ENCODE measurements at regions of chr5 and their contacts with region 1.

Region 1: DNA sequence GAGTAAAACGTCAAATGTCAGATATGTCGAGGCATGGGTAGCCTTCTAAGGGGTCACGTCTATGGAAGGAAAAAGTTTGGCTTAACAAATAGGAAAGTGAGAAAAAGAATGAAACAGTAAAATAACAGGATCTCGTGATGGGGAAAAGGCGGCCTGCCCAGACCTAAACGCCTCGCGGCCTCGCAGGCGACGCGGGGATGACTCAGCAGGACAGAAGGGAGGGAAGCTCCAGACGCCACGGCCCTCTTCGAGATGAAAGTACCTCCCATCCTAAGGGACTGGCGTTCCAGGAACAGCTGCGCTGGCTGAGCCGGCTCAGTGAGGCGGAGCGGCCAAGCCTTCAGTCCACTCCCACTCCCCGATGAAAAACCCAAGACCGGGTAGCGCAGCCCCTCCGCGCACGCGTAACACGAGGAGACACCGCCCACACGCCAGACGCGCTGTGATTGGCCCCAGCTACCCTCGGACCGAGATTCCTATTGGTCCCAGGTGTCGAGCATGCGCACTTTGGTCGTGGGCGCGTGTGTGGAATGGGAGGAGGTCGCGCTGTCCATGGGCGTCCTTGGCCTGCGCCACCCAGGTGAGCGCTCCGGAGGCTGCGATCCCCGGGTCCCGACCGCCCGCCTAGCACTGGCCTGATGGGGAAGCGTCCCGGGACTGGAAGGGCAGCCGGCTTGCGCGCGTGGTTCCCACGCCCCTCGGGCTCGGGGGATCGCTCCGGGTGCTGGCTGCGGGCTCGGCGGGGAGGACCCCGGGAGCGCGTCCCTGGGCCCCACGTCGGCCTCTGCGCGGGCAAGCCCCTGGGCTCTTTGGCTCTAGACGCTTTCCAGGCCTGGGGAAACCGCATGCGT is 588.5 kb downstream of the MTRR start:
- DNase-seq: peak; percentile 93
- CTCF ChIP-seq: no peak

Region 2: DNA sequence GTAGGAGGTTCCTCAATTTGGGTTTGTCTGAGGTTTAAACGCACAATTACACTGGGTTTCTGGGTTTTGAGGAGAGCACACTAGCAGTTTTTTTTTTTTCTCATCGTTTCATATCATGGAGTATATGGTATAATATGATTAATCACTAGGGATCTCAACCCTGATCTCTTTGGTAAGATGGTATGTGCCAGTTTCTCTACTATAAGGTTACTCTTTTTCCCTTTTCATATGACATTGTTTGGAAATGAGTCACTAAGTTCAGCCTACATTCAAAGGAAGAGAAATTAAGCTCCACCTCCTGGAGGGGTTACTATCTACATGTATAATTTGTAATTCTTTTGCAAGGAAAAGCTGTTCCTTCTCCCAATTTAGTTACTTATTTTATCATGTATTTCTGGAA is 553.2 kb before region 1 on chr5:
- in situ Hi-C with region 1: loop called (anchors 25 kb)
- DNase-seq: no peak
- CTCF ChIP-seq: no peak

Measured in GM13977 (cell line).